Psoas muscle (tissue), 8 donors: ENCODE measurements at regions of chr5 and their contacts with region 1.

Region 1: DNA sequence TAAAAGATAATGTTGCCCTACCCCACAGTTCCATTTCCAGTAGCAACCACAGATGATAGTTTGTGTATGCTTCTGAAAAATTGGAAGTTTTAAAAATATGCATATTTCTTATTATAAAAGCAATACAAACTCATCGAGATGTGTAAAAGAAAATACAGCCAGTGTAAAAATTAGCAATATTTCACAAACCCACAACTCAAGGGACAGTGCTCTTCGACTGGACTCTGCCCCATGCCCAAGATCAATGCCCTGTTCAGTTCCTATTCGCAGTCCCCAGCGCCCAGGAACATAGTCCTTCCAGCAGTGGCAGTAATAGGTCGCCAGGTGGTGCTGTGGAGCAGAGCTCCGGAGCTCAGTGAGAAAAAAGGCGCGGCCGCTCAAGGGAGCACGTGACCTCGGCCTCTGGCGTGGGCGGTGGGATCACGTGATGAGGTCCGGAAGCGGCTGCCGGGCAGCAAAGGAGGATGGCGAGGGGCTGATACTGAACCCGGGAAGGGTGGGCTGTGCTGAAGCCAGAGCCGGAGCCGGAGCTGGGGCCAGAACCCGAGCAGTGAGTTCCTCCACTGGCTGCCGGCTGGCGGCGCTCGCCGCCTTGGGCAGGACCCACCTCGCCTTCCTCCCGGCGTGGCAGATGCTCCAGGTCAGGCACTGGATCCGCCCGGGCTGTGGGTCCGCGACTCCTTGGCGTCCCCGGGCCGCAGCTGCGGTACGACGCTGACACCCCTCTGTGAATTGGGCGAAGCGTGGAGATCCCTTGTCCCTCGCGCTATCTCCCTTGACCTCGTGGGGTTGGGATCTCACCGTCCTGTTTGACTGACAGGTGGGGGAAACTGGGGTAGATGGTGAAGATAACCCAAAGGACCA is at the start of gene SLC36A1:
- DNase-seq: peak; percentile 94 to 97
- ATAC-seq: peak; percentile 93 to 98 (median 96)
- H3K4me3 ChIP-seq: peak within 1 kb of the TSS; percentile 79
- H3K27ac ChIP-seq: peak within 1 kb of the TSS; percentile 82
- H3K4me1 ChIP-seq: peaks cover 26% of the 10 kb centered on the region
- H3K27me3 ChIP-seq: no peaks in the 10 kb centered on the region
- CTCF ChIP-seq: peak; percentile 98
- total RNA-seq, gene SLC36A1: 12.0 to 19.7 (median 15.1) TPM

Region 2: GRCh38 chr5:151213800-151214613 is 233.4 kb before region 1 on chr5:
- intact Hi-C with region 1: no loop called
- DNase-seq: peak; percentile 77 to 89
- ATAC-seq: peak; percentile 59 to 79 (median 78)
- H3K4me3 ChIP-seq: peak overlapping the region; percentile 22
- H3K27ac ChIP-seq: peak overlapping the region; percentile 88
- H3K4me1 ChIP-seq: peaks cover 76% of the 10 kb centered on the region
- H3K27me3 ChIP-seq: no peaks in the 10 kb centered on the region
- CTCF ChIP-seq: no peak

Region 3: DNA sequence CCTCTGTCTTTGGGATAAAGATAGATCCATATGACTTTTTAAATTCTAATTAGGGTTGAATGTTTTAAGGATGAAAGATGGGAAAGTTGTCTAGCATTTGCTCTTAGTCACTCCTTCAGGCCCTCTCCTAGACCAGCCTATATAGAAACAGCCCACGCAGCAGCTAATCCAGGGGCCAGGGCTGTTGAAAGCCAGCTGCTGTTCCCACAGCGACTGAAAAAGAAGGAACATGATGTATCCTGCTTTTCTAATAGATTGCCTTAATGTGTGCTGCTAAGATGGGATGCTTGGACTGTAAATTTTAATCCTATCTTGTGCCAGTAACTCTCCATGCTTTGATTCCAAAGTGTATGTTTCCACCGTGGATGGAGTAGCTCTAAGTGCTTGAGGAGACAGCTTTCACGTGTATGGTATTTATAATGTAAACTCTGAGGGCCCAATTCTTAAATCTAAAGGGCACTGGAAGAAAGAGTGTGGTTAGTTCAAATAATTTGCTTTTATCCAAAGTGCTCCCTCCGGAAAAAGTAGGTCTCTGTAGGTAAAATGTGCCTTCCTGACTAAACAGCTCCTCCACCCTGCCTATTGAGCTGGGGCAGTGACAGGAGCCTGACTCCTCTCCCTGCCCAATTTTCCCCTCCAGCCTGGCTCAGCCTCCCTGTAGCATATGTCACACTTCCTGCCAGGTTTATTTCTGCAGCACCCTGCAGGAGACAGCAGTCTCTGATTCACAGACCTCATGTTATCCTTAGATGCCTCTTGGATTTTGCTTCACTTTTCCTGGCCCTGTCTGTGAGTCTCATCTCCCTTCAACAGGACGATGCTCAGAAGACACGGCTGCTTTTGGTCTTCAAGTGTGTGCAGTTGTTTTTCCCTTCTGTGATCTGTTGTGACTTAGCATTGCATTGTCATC is 33.2 kb after region 1 on chr5:
- intact Hi-C with region 1: no loop called
- DNase-seq: peak in 1 of 2 donors; percentile 68
- ATAC-seq: peak; percentile 86 to 94 (median 91)
- H3K4me3 ChIP-seq: no peak overlapping the region
- H3K27ac ChIP-seq: peak overlapping the region; percentile 64
- H3K4me1 ChIP-seq: peaks cover 13% of the 10 kb centered on the region
- H3K27me3 ChIP-seq: no peaks in the 10 kb centered on the region
- CTCF ChIP-seq: no peak

Region 4: GRCh38 chr5:151499501-151500035 is 52.2 kb after region 1 on chr5:
- intact Hi-C with region 1: loop called (anchors 1 to 5 kb)
- DNase-seq: no peak
- ATAC-seq: peak in 3 of 4 donors; percentile 33 to 34 (median 33)
- H3K4me3 ChIP-seq: no peak overlapping the region
- H3K27ac ChIP-seq: no peak overlapping the region
- H3K4me1 ChIP-seq: no peaks in the 10 kb centered on the region
- H3K27me3 ChIP-seq: no peaks in the 10 kb centered on the region
- CTCF ChIP-seq: no peak

Region 5: GRCh38 chr5:151596828-151597539 is 149.6 kb after region 1 on chr5:
- intact Hi-C with region 1: no loop called
- DNase-seq: no peak
- ATAC-seq: peak in 3 of 4 donors; percentile 34 to 54 (median 40)
- H3K4me3 ChIP-seq: no peak overlapping the region
- H3K27ac ChIP-seq: no peak overlapping the region
- H3K4me1 ChIP-seq: peaks cover 6% of the 10 kb centered on the region
- H3K27me3 ChIP-seq: no peaks in the 10 kb centered on the region
- CTCF ChIP-seq: no peak

Region 6: DNA sequence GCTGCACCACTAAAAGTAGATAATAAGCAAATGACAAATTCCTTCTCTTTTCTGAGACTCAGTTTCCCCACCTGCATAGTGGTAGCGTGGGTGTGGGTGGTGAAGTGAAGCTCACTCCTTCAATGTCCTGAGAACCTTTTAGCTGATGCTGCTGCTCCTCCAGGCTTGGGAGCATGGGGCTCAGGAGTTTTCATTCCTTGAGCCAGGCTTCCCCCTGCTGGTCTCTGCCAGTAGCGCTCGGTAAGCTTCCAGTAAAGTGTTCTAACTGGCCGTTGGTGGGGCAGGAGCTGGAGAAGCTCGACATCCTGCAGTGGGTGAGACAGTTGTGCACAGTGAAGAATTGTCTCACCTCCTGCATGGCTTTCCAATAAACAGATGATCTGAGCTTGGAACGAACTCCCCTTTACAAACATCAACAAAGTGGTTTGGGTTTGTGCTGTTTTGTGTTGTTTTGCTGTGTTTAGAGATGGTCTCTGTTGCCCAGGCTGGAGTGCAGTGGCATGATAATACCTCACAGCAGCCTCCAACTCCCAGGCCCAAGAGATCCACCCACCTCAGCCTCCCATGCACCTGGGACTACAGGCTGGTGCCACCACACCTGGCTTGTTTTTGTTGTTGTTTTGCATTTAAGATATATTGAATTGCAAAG is 204.7 kb after region 1 on chr5:
- intact Hi-C with region 1: loop called (anchors 2 to 10 kb)
- DNase-seq: peak; percentile 79 to 85
- ATAC-seq: peak; percentile 93 to 98 (median 96)
- H3K4me3 ChIP-seq: no peak overlapping the region
- H3K27ac ChIP-seq: no peak overlapping the region
- H3K4me1 ChIP-seq: no peaks in the 10 kb centered on the region
- H3K27me3 ChIP-seq: no peaks in the 10 kb centered on the region
- CTCF ChIP-seq: peak; percentile 86

Region 7: DNA sequence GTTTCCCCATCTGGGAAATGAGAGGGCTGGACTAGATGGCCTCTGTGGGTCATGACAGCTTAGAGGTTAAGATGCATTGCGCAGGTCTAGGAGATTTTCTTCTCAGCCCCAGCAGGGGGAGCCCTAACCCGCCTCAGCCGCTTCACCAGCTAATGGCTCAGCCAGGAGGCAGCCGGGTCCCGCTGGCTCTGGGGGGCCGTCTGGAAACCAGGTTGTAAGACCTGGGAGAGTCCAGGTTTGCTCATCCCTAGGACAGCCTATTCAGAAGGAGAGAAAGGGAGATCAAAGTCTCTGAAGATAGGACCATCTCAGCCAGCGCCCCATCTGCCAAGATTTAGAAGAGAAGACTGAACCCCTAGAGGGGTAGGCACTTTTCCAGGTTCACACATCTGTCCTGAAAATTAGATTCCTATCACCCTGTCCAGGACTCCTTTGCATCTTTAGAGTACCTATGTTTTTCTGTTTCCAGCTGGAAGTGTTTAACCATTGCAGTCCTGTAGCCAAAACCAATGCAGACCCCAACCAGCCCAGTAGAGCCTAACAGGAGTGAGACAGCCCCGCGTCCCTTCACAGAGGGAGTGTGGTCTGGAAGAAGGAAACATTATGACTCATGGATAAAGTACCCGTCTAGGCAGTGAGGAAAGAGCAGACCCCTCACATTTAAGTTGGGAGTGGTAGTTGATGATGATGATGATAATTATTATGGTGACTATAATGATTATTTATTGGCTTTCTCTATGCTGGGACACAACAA is 211.8 kb after region 1 on chr5:
- intact Hi-C with region 1: loop called in 1 of 2 experiments (anchors 10 kb)
- DNase-seq: peak; percentile 85 to 92
- ATAC-seq: peak; percentile 84 to 91 (median 87)
- H3K4me3 ChIP-seq: no peak overlapping the region
- H3K27ac ChIP-seq: no peak overlapping the region
- H3K4me1 ChIP-seq: peaks cover 15% of the 10 kb centered on the region
- H3K27me3 ChIP-seq: no peaks in the 10 kb centered on the region
- CTCF ChIP-seq: peak; percentile 90

Region 8: DNA sequence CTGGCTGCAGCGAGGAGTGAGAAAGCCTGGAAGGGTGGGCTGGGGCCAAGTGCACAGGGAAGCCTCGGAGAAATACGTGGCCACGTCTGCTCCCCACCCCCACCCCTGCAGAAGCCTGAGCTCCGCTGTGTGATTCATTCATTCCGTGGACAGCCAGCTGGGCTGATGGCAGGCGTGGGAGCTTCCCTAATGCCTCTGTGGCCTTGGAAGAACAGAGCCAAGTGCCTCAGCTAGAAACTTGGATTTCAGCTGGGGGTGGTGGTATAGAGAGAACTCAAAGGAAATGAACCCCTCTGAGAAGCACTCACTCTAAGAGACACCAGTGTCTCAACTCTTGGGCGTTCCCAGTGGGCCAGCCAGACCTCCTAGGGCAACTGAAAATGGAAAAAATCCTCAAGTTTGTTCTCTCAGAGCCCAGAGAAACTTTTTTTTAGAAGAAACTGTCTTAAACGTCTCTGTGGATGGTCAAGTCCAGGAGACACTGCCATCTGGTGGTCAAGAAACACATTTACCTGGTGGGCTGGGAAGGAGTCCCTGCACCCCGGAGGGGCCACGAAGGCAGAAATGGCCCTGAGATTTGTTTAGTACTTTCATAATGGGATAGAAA is 293.0 kb after region 1 on chr5:
- intact Hi-C with region 1: loop called in 1 of 2 experiments (anchors 5 kb)
- DNase-seq: peak; percentile 73 to 75
- ATAC-seq: peak; percentile 70 to 81 (median 78)
- H3K4me3 ChIP-seq: peak overlapping the region; percentile 5
- H3K27ac ChIP-seq: peak overlapping the region; percentile 62
- H3K4me1 ChIP-seq: peaks cover 18% of the 10 kb centered on the region
- H3K27me3 ChIP-seq: no peaks in the 10 kb centered on the region
- CTCF ChIP-seq: peak; percentile 88